Panc1 (cell line): ENCODE measurements at regions of chr2 and their contacts with region 1.

Region 1: DNA sequence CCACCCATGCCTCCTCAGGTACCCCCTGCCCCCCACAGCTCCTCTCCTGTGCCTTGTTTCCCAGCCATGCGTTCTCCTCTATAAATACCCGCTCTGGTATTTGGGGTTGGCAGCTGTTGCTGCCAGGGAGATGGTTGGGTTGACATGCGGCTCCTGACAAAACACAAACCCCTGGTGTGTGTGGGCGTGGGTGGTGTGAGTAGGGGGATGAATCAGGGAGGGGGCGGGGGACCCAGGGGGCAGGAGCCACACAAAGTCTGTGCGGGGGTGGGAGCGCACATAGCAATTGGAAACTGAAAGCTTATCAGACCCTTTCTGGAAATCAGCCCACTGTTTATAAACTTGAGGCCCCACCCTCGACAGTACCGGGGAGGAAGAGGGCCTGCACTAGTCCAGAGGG is 803 bp upstream of the DES start:
- DNase-seq: no peak
- ATAC-seq: no peak
- H3K4me3 ChIP-seq: no peak overlapping the region
- H3K27ac ChIP-seq: no peak overlapping the region
- H3K4me1 ChIP-seq: no peaks in the 10 kb centered on the region
- H3K27me3 ChIP-seq: no peaks in the 10 kb centered on the region
- CTCF ChIP-seq: no peak

Region 2: DNA sequence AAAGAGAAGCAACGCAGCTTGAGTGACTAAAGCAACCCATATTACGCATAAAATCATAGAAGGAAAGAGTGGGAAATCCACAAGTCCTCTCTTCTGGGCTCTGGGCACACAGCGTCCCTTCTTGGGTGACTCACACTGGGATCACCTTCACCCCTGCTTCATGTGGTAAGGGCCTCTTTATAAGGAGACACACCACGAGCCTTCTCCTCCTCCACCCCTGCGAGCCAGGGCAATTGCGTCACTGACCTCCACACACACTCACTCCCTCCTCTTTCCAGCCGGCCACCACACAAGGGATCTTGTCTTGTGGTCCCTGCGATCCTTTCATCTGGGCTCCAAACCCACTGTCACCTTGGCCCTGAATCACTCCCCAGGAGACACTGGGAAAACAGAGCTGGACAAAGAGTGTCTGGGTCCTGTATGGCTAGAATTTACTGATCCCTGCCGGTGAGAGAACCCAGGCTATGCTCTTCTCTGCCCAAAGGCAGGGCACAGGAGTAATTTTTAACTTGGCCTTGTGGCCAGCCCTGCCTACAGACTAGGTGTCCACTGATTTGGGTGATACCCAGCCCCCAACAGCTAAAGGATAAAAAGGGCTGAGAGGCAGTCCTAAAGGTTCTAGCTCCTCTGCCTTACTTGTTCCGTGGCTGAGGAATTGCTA is 292.0 kb before region 1 on chr2:
- CTCF ChIA-PET with region 1: no interaction called
- POLR2A ChIA-PET with region 1: interaction called, 14 read pairs
- in situ Hi-C with region 1: no loop called
- intact Hi-C with region 1: no loop called
- DNase-seq: no peak
- ATAC-seq: peak; percentile 45; the same call in 1 of the 2 replicates
- H3K4me3 ChIP-seq: no peak overlapping the region
- H3K27ac ChIP-seq: no peak overlapping the region
- H3K4me1 ChIP-seq: peaks cover 5% of the 10 kb centered on the region
- H3K27me3 ChIP-seq: no peaks in the 10 kb centered on the region
- CTCF ChIP-seq: no peak